Activated CD4-positive, alpha-beta memory T cell treated with anti-CD3 and anti-CD28 coated beads for 36 hours (primary cell): ENCODE measurements at regions of chr11 and their contacts with region 1.

Region 1: GRCh38 chr11:111359223-111360149 is 19.6 kb downstream of the POU2AF1 start:
- DNase-seq: peak; percentile 22
- H3K4me3 Mint-ChIP-seq: no peak overlapping the region
- H3K27ac Mint-ChIP-seq: no peak overlapping the region
- H3K4me1 Mint-ChIP-seq: peaks cover 4% of the 10 kb centered on the region
- H3K27me3 Mint-ChIP-seq: no peaks in the 10 kb centered on the region

Region 2: DNA sequence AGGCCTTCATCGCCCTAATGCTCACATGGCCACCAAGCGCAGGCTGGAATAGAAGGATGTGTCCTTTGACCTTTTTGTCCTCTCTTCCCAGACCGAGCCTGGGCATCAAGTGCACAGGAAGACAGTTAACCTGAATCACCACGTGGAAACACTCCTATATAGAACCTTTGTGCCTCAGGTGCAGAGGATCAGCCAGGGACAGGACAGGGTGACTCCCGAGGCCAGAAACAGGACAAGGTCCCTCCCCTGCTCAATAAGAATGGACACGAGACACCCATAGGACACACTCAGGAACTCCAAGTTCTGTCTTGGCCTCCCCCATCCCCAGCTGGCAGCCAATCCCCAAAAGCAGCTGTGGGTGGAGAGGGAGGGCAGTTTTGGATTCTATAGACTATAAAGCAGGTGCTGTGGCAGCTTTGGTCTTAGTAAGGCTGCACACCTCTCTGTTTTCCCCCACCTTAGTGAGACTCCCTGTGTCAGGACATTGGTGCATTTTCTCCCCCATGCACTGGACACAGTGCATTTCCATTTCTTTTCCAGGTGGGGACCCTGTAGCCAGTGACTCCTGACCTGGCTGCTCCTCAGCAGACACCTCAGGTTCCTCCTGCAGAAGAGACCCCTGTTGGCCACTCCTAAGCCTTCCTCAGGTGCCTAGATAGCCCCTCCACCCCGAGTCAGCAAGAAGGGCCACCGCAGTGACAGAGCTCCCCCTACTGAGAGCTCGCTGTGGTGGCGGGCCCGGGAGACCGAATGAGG is 63.2 kb after region 1 on chr11:
- CTCF ChIA-PET with region 1: interaction called, 38 read pairs
- POLR2A ChIA-PET with region 1: no interaction called
- intact Hi-C with region 1: loop called (anchors 1 kb)
- DNase-seq: peak; percentile 73
- H3K4me3 Mint-ChIP-seq: no peak overlapping the region
- H3K27ac Mint-ChIP-seq: no peak overlapping the region
- H3K4me1 Mint-ChIP-seq: peaks cover 4% of the 10 kb centered on the region
- H3K27me3 Mint-ChIP-seq: no peaks in the 10 kb centered on the region

Region 3: DNA sequence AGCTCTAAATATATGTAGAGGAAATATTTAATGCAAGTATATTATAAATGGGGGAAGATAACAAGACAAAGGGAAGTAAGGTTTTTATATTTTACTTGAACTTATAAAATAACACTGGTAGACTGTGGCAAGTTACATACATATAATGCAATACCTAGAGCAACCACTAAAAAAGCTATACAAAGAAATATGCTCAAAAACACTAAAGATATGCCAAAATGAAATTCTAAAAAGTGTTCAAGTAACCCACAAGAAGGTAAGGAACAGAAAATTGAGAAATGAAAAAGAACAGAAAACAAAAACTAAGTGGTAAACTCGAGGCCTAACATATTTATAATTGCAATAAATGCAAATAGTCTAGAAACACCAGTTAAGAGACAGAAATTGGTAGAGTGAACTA is 120.2 kb after region 1 on chr11:
- CTCF ChIA-PET with region 1: no interaction called
- POLR2A ChIA-PET with region 1: no interaction called
- intact Hi-C with region 1: no loop called
- DNase-seq: no peak
- H3K4me3 Mint-ChIP-seq: no peak overlapping the region
- H3K27ac Mint-ChIP-seq: no peak overlapping the region
- H3K4me1 Mint-ChIP-seq: no peaks in the 10 kb centered on the region
- H3K27me3 Mint-ChIP-seq: peaks cover 32% of the 10 kb centered on the region